ENCODE measurements at regions of chr1 and their contacts with region 1.

Region 1: GRCh38 chr1:67853704-67854103 is 20.4 kb upstream of the GNG12 start:
- DNase-seq: peak; percentile 67 to 86 (median 76)
- H3K4me3 ChIP-seq: no peak overlapping the region
- H3K27ac ChIP-seq: no peak overlapping the region
- H3K4me1 ChIP-seq: peaks cover 7% of the 10 kb centered on the region
- H3K27me3 ChIP-seq: no peaks in the 10 kb centered on the region
- CTCF ChIP-seq: peak; percentile 27 to 66 (median 58)
- EP300 ChIP-seq: no peak
- POLR2A ChIP-seq: no peak

Region 2: GRCh38 chr1:68010090-68010489 is 156.4 kb after region 1 on chr1:
- intact Hi-C with region 1: loop called in 2 of 4 experiments (anchors 5 to 10 kb)
- DNase-seq: no peak
- H3K4me3 ChIP-seq: no peak overlapping the region
- H3K27ac ChIP-seq: no peak overlapping the region
- H3K4me1 ChIP-seq: no peaks in the 10 kb centered on the region
- H3K27me3 ChIP-seq: no peaks in the 10 kb centered on the region
- CTCF ChIP-seq: peak in 1 of 3 donors; percentile 32
- EP300 ChIP-seq: no peak
- POLR2A ChIP-seq: no peak

Region 3: DNA sequence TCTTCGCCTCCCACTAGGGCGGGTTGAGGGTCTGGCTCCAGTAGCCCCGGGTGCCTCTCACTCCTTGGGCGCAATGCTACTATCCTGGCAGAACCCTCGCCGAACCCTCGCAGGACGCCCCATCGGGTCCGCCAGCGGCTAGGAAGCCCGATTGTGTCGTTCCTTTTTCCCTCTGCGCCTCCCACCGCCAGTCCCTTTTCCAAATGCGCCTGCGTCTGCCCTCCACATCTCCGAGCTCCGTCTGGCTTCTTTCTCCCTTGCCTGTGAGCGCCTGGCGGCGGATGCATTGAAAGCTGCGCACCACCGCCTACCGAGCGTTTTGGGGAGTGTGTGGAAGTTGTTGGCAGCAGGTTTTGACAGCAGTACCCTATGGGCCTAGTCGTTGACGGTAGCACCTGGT is 197.8 kb after region 1 on chr1:
- intact Hi-C with region 1: loop called in 1 of 4 experiments (anchors 5 kb)
- DNase-seq: peak; percentile 73 to 83 (median 75)
- H3K4me3 ChIP-seq: peak overlapping the region; percentile 35
- H3K27ac ChIP-seq: peak overlapping the region in 1 of 2 donors; percentile 67
- H3K4me1 ChIP-seq: no peaks in the 10 kb centered on the region
- H3K27me3 ChIP-seq: no peaks in the 10 kb centered on the region
- CTCF ChIP-seq: peak; percentile 19 to 59 (median 53)
- EP300 ChIP-seq: no peak
- POLR2A ChIP-seq: no peak

Region 4: GRCh38 chr1:68111519-68112436 is 258.1 kb after region 1 on chr1:
- intact Hi-C with region 1: loop called in 2 of 4 experiments (anchors 5 kb)
- DNase-seq: peak; percentile 82 to 91 (median 84)
- H3K4me3 ChIP-seq: no peak overlapping the region
- H3K27ac ChIP-seq: peak overlapping the region in 1 of 2 donors; percentile 3
- H3K4me1 ChIP-seq: peaks cover 3% of the 10 kb centered on the region
- H3K27me3 ChIP-seq: no peaks in the 10 kb centered on the region
- CTCF ChIP-seq: peak; percentile 60 to 74 (median 63)
- EP300 ChIP-seq: no peak
- POLR2A ChIP-seq: no peak

Region 5: GRCh38 chr1:68346188-68346808 is 492.6 kb after region 1 on chr1:
- intact Hi-C with region 1: loop called in 3 of 4 experiments (anchors 5 kb)
- DNase-seq: no peak
- H3K4me3 ChIP-seq: no peak overlapping the region
- H3K27ac ChIP-seq: no peak overlapping the region
- H3K4me1 ChIP-seq: no peaks in the 10 kb centered on the region
- H3K27me3 ChIP-seq: no peaks in the 10 kb centered on the region
- CTCF ChIP-seq: peak in 2 of 3 donors; percentile 26 to 53
- EP300 ChIP-seq: no peak
- POLR2A ChIP-seq: no peak